ENCODE measurements at regions of chr1 and their contacts with region 1.

Region 1: GRCh38 chr1:160837558-160838205 is 25.0 kb downstream of the CD244 start:
- DNase-seq: peak; percentile 78
- ATAC-seq: peak; percentile 95
- H3K4me3 ChIP-seq: no peak overlapping the region
- H3K27ac ChIP-seq: peak overlapping the region; percentile 87
- H3K4me1 ChIP-seq: peaks cover 28% of the 10 kb centered on the region
- H3K27me3 ChIP-seq: no peaks in the 10 kb centered on the region
- CTCF ChIP-seq: peak; percentile 47 to 55 (median 53)
- EP300 ChIP-seq: peak in 1 of 2 experiments; percentile 47; a peak in 1 of 4 replicates
- POLR2A ChIP-seq: peak; percentile 70
- RAD21 ChIP-seq: peak; percentile 34; the same call in 1 of the 2 replicates

Region 2: DNA sequence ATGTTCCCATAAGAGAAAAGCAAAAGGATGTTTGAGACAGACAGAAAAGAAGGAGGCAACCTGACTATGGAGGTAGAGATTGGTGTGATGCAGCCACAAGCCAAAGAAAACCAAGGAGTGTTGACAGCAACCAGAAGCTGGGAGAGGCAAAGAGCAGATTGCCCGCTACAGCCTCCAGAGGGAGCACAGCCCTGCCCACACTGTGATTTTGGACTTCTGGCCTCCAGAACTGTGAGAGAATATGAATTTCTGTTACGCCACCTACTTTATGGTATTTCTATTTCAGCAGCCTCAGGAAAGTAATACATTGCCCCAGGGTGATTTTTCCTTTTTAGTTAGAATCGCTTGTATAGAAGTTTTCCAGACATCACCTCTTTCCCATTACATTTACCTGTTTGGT is 343.1 kb before region 1 on chr1:
- CTCF ChIA-PET with region 1: no interaction called
- POLR2A ChIA-PET with region 1: no interaction called
- RAD21 ChIA-PET with region 1: no interaction called
- SMC1A ChIA-PET with region 1: no interaction called
- in situ Hi-C with region 1: no loop called
- intact Hi-C with region 1: no loop called
- DNase-seq: no peak
- ATAC-seq: no peak
- H3K4me3 ChIP-seq: no peak overlapping the region
- H3K27ac ChIP-seq: no peak overlapping the region
- H3K4me1 ChIP-seq: peaks cover 3% of the 10 kb centered on the region
- H3K27me3 ChIP-seq: no peaks in the 10 kb centered on the region
- CTCF ChIP-seq: 0 out of 6 replicates have a peak, but pooled peaks of 2 of the 3 experiments have one; percentile 13 to 14
- EP300 ChIP-seq: no peak
- POLR2A ChIP-seq: no peak
- RAD21 ChIP-seq: no peak

Region 3: DNA sequence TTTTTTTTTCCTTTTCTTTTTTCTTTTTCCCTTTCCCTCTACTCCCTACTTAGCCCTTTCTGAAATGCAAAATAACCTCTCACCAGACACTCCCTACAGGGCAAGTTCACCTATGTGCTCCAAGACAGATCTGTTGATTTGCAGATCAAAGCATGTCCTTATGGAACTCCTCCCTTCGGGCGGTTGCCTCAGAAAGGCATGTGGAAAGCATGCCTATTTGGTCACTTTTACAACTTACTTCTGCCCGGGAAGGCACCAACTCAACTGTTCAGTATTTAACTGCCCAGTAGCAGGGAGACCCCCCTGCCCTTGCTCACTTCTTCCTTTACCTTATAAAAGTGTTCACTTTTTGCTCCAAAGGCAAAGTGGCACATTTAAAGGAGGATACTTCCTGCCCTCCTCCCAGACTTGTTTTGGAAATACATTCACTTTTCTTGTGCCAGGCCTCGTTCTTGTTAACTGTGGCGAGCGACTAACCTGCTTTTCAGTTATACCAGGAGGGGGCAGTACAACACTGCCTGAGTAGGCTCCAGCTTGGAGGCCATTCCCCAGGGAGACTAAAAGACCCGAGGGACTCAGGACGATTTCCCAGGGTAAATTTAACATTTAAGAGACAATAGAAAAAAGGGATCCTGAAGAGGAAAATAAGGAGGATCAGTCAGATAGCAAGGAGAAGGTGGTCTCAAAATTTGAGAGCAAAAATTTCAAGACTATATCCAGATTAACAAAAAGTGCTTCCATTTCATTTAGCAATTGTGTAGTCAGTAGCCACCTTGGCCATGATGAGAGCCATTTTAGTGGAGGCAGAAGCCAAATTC is 111.0 kb before region 1 on chr1:
- CTCF ChIA-PET with region 1: interaction called, 28 read pairs
- POLR2A ChIA-PET with region 1: no interaction called
- RAD21 ChIA-PET with region 1: interaction called, 4 read pairs
- SMC1A ChIA-PET with region 1: interaction called, 9 read pairs
- in situ Hi-C with region 1: loop called (anchors 5 kb)
- intact Hi-C with region 1: no loop called
- DNase-seq: no peak
- ATAC-seq: peak; percentile 80
- H3K4me3 ChIP-seq: no peak overlapping the region
- H3K27ac ChIP-seq: peak overlapping the region; percentile 85
- H3K4me1 ChIP-seq: peaks cover 40% of the 10 kb centered on the region
- H3K27me3 ChIP-seq: no peaks in the 10 kb centered on the region
- CTCF ChIP-seq: peak; percentile 81 to 92 (median 91); a peak in 5 of 6 replicates
- EP300 ChIP-seq: no peak
- POLR2A ChIP-seq: no peak
- RAD21 ChIP-seq: peak; percentile 99

Region 4: DNA sequence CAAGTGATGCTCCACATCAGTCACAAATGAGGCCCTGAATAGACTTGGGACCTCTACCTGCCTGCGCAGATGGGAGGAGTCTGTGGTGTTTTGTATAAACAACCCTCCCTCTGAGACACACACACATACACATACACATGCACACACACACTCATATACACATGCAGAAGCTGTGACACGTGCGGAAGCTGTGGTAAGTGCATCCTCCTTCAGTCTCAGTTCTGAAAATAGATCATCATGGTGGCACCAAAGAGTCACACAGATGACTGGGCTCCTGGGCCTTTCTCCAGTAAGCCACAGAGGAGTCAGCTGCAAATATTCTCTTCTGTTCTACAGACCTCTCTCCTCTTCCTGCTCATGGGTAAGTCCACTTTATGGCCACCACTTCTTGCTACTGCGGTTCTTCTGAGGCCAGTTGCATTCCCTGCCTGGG is 41.7 kb before region 1 on chr1 and contains the start of gene LY9:
- CTCF ChIA-PET with region 1: interaction called, 30 read pairs
- POLR2A ChIA-PET with region 1: interaction called, 4 read pairs
- RAD21 ChIA-PET with region 1: interaction called, 13 read pairs
- SMC1A ChIA-PET with region 1: interaction called, 35 read pairs
- in situ Hi-C with region 1: no loop called
- intact Hi-C with region 1: no loop called
- DNase-seq: peak; percentile 97
- ATAC-seq: peak; percentile 79
- H3K4me3 ChIP-seq: peak within 1 kb of the TSS; percentile 63
- H3K27ac ChIP-seq: peak within 1 kb of the TSS; percentile 78
- H3K4me1 ChIP-seq: peaks cover 42% of the 10 kb centered on the region
- H3K27me3 ChIP-seq: no peaks in the 10 kb centered on the region
- CTCF ChIP-seq: no peak
- EP300 ChIP-seq: peak; percentile 96 to 98
- POLR2A ChIP-seq: peak; percentile 66
- RAD21 ChIP-seq: no peak
- polyA plus RNA-seq, gene LY9: 2.7 to 2.8 TPM

Region 5: GRCh38 chr1:160855181-160855981 is 17.7 kb after region 1 on chr1:
- CTCF ChIA-PET with region 1: interaction called, 99 read pairs
- POLR2A ChIA-PET with region 1: interaction called, 25 read pairs
- RAD21 ChIA-PET with region 1: interaction called, 50 read pairs
- SMC1A ChIA-PET with region 1: interaction called, 229 read pairs
- in situ Hi-C with region 1: no loop called
- intact Hi-C with region 1: no loop called
- DNase-seq: peak; percentile 51
- ATAC-seq: peak; percentile 85
- H3K4me3 ChIP-seq: no peak overlapping the region
- H3K27ac ChIP-seq: no peak overlapping the region
- H3K4me1 ChIP-seq: peaks cover 14% of the 10 kb centered on the region
- H3K27me3 ChIP-seq: no peaks in the 10 kb centered on the region
- CTCF ChIP-seq: no peak
- EP300 ChIP-seq: no peak
- POLR2A ChIP-seq: no peak
- RAD21 ChIP-seq: no peak

Region 6: GRCh38 chr1:160868141-160868540 is 30.5 kb after region 1 on chr1:
- CTCF ChIA-PET with region 1: interaction called, 99 read pairs
- POLR2A ChIA-PET with region 1: interaction called, 25 read pairs
- RAD21 ChIA-PET with region 1: interaction called, 50 read pairs
- SMC1A ChIA-PET with region 1: interaction called, 229 read pairs
- in situ Hi-C with region 1: no loop called
- intact Hi-C with region 1: no loop called
- DNase-seq: no peak
- ATAC-seq: 0 out of 3 replicates have a peak, but pooled peaks have one; percentile 16
- H3K4me3 ChIP-seq: no peak overlapping the region
- H3K27ac ChIP-seq: no peak overlapping the region
- H3K4me1 ChIP-seq: peaks cover 5% of the 10 kb centered on the region
- H3K27me3 ChIP-seq: no peaks in the 10 kb centered on the region
- CTCF ChIP-seq: no peak
- EP300 ChIP-seq: no peak
- POLR2A ChIP-seq: no peak
- RAD21 ChIP-seq: no peak

Region 7: GRCh38 chr1:160884579-160884978 is 46.9 kb after region 1 on chr1:
- CTCF ChIA-PET with region 1: interaction called, 80 read pairs
- POLR2A ChIA-PET with region 1: no interaction called
- RAD21 ChIA-PET with region 1: interaction called, 5 read pairs
- SMC1A ChIA-PET with region 1: interaction called, 21 read pairs
- in situ Hi-C with region 1: no loop called
- intact Hi-C with region 1: no loop called
- DNase-seq: no peak
- ATAC-seq: peak; percentile 65
- H3K4me3 ChIP-seq: no peak overlapping the region
- H3K27ac ChIP-seq: no peak overlapping the region
- H3K4me1 ChIP-seq: no peaks in the 10 kb centered on the region
- H3K27me3 ChIP-seq: no peaks in the 10 kb centered on the region
- CTCF ChIP-seq: peak; percentile 10 to 54 (median 40); a peak in 3 of 6 replicates
- EP300 ChIP-seq: no peak
- POLR2A ChIP-seq: no peak
- RAD21 ChIP-seq: peak; percentile 41

Region 8: GRCh38 chr1:160987359-160988062 is 149.8 kb after region 1 on chr1:
- CTCF ChIA-PET with region 1: interaction called, 28 read pairs
- POLR2A ChIA-PET with region 1: no interaction called
- RAD21 ChIA-PET with region 1: interaction called, 14 read pairs
- SMC1A ChIA-PET with region 1: interaction called, 27 read pairs
- in situ Hi-C with region 1: no loop called
- intact Hi-C with region 1: loop called (anchors 1 kb)
- DNase-seq: no peak
- ATAC-seq: no peak
- H3K4me3 ChIP-seq: no peak overlapping the region
- H3K27ac ChIP-seq: no peak overlapping the region
- H3K4me1 ChIP-seq: no peaks in the 10 kb centered on the region; the same call in 1 of the 2 replicates
- H3K27me3 ChIP-seq: no peaks in the 10 kb centered on the region
- CTCF ChIP-seq: no peak
- EP300 ChIP-seq: no peak
- POLR2A ChIP-seq: no peak
- RAD21 ChIP-seq: no peak

Region 9: GRCh38 chr1:162168249-162168648 is 1330.6 kb after region 1 on chr1:
- CTCF ChIA-PET with region 1: no interaction called
- POLR2A ChIA-PET with region 1: no interaction called
- RAD21 ChIA-PET with region 1: no interaction called
- SMC1A ChIA-PET with region 1: no interaction called
- in situ Hi-C with region 1: no loop called
- intact Hi-C with region 1: no loop called
- DNase-seq: no peak
- ATAC-seq: no peak
- H3K4me3 ChIP-seq: no peak overlapping the region
- H3K27ac ChIP-seq: no peak overlapping the region
- H3K4me1 ChIP-seq: no peaks in the 10 kb centered on the region
- H3K27me3 ChIP-seq: peaks cover 0 to 5% of the 10 kb centered on the region in 2 experiments; a peak in 2 of 4 replicates
- CTCF ChIP-seq: no peak
- EP300 ChIP-seq: no peak
- POLR2A ChIP-seq: no peak
- RAD21 ChIP-seq: no peak

Measured in GM12878 (cell line).